CD4-positive, alpha-beta memory T cell (primary cell): ENCODE measurements at regions of chr19 and their contacts with region 1.

Region 1: GRCh38 chr19:55624109-55625003 is at the start of gene ZNF784:
- DNase-seq: peak; percentile 90 to 94 (median 93)
- H3K4me3 ChIP-seq: peak within 1 kb of the TSS; percentile 57 to 64
- H3K4me3 Mint-ChIP-seq: peak within 1 kb of the TSS; percentile 88 to 96 (median 90)
- H3K27ac ChIP-seq: peak within 1 kb of the TSS; percentile 88
- H3K27ac Mint-ChIP-seq: peak within 1 kb of the TSS; percentile 96 to 99 (median 98)
- H3K4me1 ChIP-seq: peaks cover 38% of the 10 kb centered on the region
- H3K4me1 Mint-ChIP-seq: peaks cover 30 to 57% (median 42%) of the 10 kb centered on the region in 4 donors
- H3K27me3 ChIP-seq: no peaks in the 10 kb centered on the region
- H3K27me3 Mint-ChIP-seq: no peaks in the 10 kb centered on the region
- total RNA-seq, gene ZNF784: 7.4 TPM

Region 2: DNA sequence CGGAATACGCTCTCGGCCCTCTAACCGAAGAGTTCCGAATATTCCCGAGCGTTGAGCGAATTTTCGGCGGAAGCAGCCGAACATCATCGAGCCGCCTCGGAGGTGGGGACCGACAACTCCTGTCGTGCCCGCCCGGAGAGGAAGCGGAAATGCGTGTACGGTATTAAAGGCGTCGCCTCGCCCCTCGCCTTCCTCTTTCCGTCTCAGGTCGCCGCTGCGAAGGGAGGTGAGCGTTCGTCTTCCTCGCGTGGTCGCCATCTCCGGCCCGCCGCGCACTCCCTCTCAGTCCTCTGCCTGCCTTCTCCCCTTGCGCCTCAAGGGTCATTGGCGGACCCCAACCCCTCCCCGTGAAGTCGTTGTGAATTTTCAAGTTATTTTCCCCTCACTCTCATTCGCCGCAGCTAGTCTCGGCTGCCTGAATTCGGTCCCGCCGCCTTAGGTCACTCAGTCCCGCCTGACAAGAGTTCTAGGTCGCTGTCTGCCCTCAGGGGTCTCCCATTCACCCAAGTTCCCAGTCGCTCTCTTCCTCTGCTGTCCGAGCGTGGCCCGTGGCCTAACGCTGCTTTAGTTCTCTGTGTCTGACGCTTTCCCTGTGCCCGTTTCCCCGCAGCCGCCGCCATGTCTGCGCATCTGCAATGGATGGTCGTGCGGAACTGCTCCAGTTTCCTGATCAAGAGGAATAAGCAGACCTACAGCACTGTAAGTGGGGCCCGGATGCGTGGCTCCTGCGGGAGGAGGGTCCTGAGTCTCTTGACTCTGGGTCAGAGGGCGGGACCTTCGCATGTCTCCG is 238.4 kb before region 1 on chr19 and contains the start of gene RPL28:
- CTCF ChIA-PET with region 1: no interaction called
- POLR2A ChIA-PET with region 1: interaction called, 4 read pairs
- intact Hi-C with region 1: loop called (anchors 10 kb)
- DNase-seq: peak; percentile 98 to 100 (median 99)
- H3K4me3 ChIP-seq: peak within 1 kb of the TSS; percentile 85 to 88
- H3K4me3 Mint-ChIP-seq: peak within 1 kb of the TSS; percentile 99 to 100 (median 100)
- H3K27ac ChIP-seq: peak within 1 kb of the TSS; percentile 94
- H3K27ac Mint-ChIP-seq: peak within 1 kb of the TSS; percentile 98 to 100 (median 99)
- H3K4me1 ChIP-seq: peaks cover 68% of the 10 kb centered on the region
- H3K4me1 Mint-ChIP-seq: peaks cover 39 to 88% (median 63%) of the 10 kb centered on the region in 4 donors
- H3K27me3 ChIP-seq: no peaks in the 10 kb centered on the region
- H3K27me3 Mint-ChIP-seq: no peaks in the 10 kb centered on the region
- total RNA-seq, gene RPL28: 3,136 to 3,159 TPM

Region 3: DNA sequence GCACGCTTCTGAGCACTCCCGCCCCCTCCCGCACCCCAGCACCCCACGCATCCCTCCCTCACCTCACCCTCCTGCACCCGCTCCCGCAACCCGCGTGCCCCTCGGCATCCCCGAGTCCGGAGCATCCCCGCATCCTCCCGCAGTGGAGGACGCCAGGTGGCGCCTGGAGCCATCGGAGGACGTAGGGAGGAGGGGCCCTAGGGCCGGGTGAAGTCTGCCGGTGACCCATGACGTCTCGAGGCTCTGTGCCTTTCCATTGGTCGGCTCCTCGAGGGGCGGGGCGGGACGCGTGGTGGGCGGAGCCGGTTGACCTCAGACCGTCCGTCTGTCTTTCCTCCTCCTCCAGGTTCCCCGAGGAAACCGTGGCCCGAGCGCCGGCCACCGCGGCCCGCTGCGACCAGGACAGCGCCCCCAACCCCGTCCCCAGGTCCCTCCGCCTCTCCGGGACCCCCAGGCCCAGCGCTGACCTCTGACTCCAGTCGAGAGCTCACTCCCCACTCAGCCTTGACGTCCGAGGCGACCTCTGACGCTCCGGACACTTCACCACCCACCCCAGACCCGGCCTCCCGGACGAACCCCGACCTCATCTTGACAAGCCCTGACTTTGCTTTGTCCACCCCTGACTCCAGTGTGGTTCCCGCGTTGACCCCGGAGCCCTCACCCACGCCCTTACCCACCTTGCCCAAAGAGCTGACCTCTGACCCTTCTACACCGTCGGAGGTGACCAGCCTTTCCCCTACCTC is 107.3 kb before region 1 on chr19:
- CTCF ChIA-PET with region 1: interaction called, 165 read pairs
- POLR2A ChIA-PET with region 1: interaction called, 3 read pairs
- intact Hi-C with region 1: no loop called
- DNase-seq: peak; percentile 85 to 86 (median 86)
- H3K4me3 ChIP-seq: peak overlapping the region in 1 of 2 donors; percentile 38
- H3K4me3 Mint-ChIP-seq: peak overlapping the region; percentile 71 to 86 (median 82)
- H3K27ac ChIP-seq: peak overlapping the region; percentile 42
- H3K27ac Mint-ChIP-seq: peak overlapping the region; percentile 77 to 97 (median 92)
- H3K4me1 ChIP-seq: peaks cover 6% of the 10 kb centered on the region
- H3K4me1 Mint-ChIP-seq: peaks cover 3 to 4% (median 3%) of the 10 kb centered on the region in 4 donors
- H3K27me3 ChIP-seq: no peaks in the 10 kb centered on the region
- H3K27me3 Mint-ChIP-seq: peaks cover 1 to 11% of the 10 kb centered on the region in 2 donors

Region 4: GRCh38 chr19:55586976-55587668 is 37.2 kb before region 1 on chr19:
- CTCF ChIA-PET with region 1: interaction called, 3 read pairs
- POLR2A ChIA-PET with region 1: interaction called, 4 read pairs
- intact Hi-C with region 1: loop called (anchors 1 kb)
- DNase-seq: peak; percentile 88 to 96 (median 91)
- H3K4me3 ChIP-seq: peak overlapping the region in 1 of 2 donors; percentile 60
- H3K4me3 Mint-ChIP-seq: peak overlapping the region; percentile 84 to 94 (median 87)
- H3K27ac ChIP-seq: no peak overlapping the region
- H3K27ac Mint-ChIP-seq: peak overlapping the region; percentile 85 to 93 (median 88)
- H3K4me1 ChIP-seq: peaks cover 29% of the 10 kb centered on the region
- H3K4me1 Mint-ChIP-seq: peaks cover 12 to 46% (median 28%) of the 10 kb centered on the region in 4 donors
- H3K27me3 ChIP-seq: no peaks in the 10 kb centered on the region
- H3K27me3 Mint-ChIP-seq: no peaks in the 10 kb centered on the region

Region 5: DNA sequence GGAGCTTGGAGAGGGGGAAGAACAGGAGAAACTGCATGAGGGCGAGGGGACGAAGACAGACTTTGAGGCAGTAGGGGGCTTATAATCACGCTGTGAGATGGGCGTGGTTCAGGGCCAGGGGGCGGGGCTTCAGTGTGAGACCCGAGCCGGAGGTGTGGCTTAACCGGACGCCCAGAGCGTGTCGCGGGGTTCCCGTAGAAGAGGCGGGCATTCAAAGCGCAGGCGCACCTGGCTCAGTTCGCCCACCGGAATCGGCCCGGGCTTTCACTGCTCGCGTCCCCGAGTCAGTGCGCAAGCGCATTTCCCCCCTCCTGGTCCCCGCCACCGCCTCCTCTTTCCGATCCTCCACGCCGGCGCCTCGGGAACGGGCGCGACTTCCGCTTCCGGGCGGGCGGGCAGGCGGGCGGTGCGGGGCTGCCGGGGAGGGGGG is 19.1 kb before region 1 on chr19:
- CTCF ChIA-PET with region 1: interaction called, 94 read pairs
- POLR2A ChIA-PET with region 1: interaction called, 95 read pairs
- intact Hi-C with region 1: loop called (anchors 1 kb)
- DNase-seq: peak; percentile 95 to 98 (median 97)
- H3K4me3 ChIP-seq: peak overlapping the region; percentile 43 to 83
- H3K4me3 Mint-ChIP-seq: peak overlapping the region; percentile 79 to 93 (median 84)
- H3K27ac ChIP-seq: peak overlapping the region; percentile 88
- H3K27ac Mint-ChIP-seq: peak overlapping the region; percentile 83 to 97 (median 94)
- H3K4me1 ChIP-seq: peaks cover 42% of the 10 kb centered on the region
- H3K4me1 Mint-ChIP-seq: peaks cover 41 to 73% (median 48%) of the 10 kb centered on the region in 4 donors
- H3K27me3 ChIP-seq: no peaks in the 10 kb centered on the region
- H3K27me3 Mint-ChIP-seq: no peaks in the 10 kb centered on the region

Region 6: GRCh38 chr19:55643348-55644176 is 19.2 kb after region 1 on chr19 and contains the start of gene ZNF581:
- CTCF ChIA-PET with region 1: interaction called, 12 read pairs
- POLR2A ChIA-PET with region 1: interaction called, 85 read pairs
- intact Hi-C with region 1: no loop called
- DNase-seq: peak; percentile 77 to 85 (median 79)
- H3K4me3 ChIP-seq: peak within 1 kb of the TSS; percentile 53 to 83
- H3K4me3 Mint-ChIP-seq: peak within 1 kb of the TSS; percentile 86 to 96 (median 92)
- H3K27ac ChIP-seq: peak within 1 kb of the TSS; percentile 69
- H3K27ac Mint-ChIP-seq: peak within 1 kb of the TSS; percentile 87 to 99 (median 94)
- H3K4me1 ChIP-seq: peaks cover 49% of the 10 kb centered on the region
- H3K4me1 Mint-ChIP-seq: peaks cover 29 to 62% (median 45%) of the 10 kb centered on the region in 4 donors
- H3K27me3 ChIP-seq: no peaks in the 10 kb centered on the region
- H3K27me3 Mint-ChIP-seq: no peaks in the 10 kb centered on the region
- total RNA-seq, gene ZNF581: 21.2 to 23.4 TPM

Region 7: GRCh38 chr19:55679343-55680257 is 55.2 kb after region 1 on chr19:
- CTCF ChIA-PET with region 1: no interaction called
- POLR2A ChIA-PET with region 1: no interaction called
- intact Hi-C with region 1: no loop called
- DNase-seq: peak in 1 of 5 donors; percentile 35
- H3K4me3 ChIP-seq: no peak overlapping the region
- H3K4me3 Mint-ChIP-seq: no peak overlapping the region
- H3K27ac ChIP-seq: no peak overlapping the region
- H3K27ac Mint-ChIP-seq: peak overlapping the region in 2 of 7 donors; percentile 18 to 26
- H3K4me1 ChIP-seq: peaks cover 51% of the 10 kb centered on the region
- H3K4me1 Mint-ChIP-seq: peaks cover 28 to 67% (median 38%) of the 10 kb centered on the region in 4 donors
- H3K27me3 ChIP-seq: no peaks in the 10 kb centered on the region
- H3K27me3 Mint-ChIP-seq: no peaks in the 10 kb centered on the region